Activated naive CD4-positive, alpha-beta T cell treated with anti-CD3 and anti-CD28 coated beads for 36 hours (primary cell): ENCODE measurements at regions of chr13 and their contacts with region 1.

Region 1: GRCh38 chr13:43804461-43805070 is 17.8 kb upstream of the ENOX1 start:
- DNase-seq: peak; percentile 15
- H3K4me3 Mint-ChIP-seq: no peak overlapping the region
- H3K27ac Mint-ChIP-seq: no peak overlapping the region
- H3K4me1 Mint-ChIP-seq: peaks cover 8% of the 10 kb centered on the region
- H3K27me3 Mint-ChIP-seq: peaks cover 17% of the 10 kb centered on the region

Region 2: DNA sequence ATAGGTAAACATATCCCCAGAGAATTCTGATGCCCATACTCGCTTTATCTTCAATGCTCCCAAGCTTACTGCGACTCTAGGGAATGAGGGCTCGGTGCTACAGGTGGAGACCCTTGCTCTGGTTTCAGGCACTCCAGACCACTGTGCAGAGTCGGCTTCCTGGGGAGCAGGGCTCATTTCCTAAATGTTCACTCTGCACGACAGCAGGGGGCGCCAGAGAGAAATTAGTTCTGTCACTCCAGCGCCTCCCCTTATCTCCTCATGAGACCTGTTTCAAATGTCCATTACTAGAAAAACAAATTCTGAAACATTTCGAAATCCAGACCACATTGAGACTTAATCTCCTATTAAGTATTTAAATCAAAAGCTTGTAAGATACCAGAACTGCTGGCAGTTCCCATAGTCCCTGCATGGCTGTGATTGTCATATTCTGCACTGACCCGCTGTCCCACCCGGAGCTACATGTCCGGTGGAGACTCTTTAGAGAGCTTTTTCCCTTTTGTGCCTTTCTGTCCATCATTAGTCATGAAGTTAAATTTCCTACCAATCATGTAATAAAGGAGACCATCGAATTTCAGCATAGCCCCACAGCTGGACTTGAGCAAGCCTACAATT is 834.9 kb before region 1 on chr13:
- CTCF ChIA-PET with region 1: interaction called, 11 read pairs
- intact Hi-C with region 1: loop called (anchors 1 kb)
- DNase-seq: peak; percentile 88
- H3K4me3 Mint-ChIP-seq: no peak overlapping the region
- H3K27ac Mint-ChIP-seq: no peak overlapping the region
- H3K4me1 Mint-ChIP-seq: peaks cover 8% of the 10 kb centered on the region
- H3K27me3 Mint-ChIP-seq: no peaks in the 10 kb centered on the region

Region 3: GRCh38 chr13:43448605-43449336 is 355.8 kb before region 1 on chr13:
- CTCF ChIA-PET with region 1: no interaction called
- intact Hi-C with region 1: loop called (anchors 10 kb)
- DNase-seq: no peak
- H3K4me3 Mint-ChIP-seq: no peak overlapping the region
- H3K27ac Mint-ChIP-seq: no peak overlapping the region
- H3K4me1 Mint-ChIP-seq: no peaks in the 10 kb centered on the region
- H3K27me3 Mint-ChIP-seq: peaks cover 11% of the 10 kb centered on the region

Region 4: GRCh38 chr13:43786773-43787517 is 17.6 kb before region 1 on chr13 and contains the start of gene ENOX1:
- CTCF ChIA-PET with region 1: interaction called, 7 read pairs
- intact Hi-C with region 1: loop called (anchors 2 kb)
- DNase-seq: peak; percentile 50
- H3K4me3 Mint-ChIP-seq: peak within 1 kb of the TSS; percentile 76
- H3K27ac Mint-ChIP-seq: no peak within 1 kb of the TSS
- H3K4me1 Mint-ChIP-seq: peaks cover 9% of the 10 kb centered on the region
- H3K27me3 Mint-ChIP-seq: peaks cover 45% of the 10 kb centered on the region
- total RNA-seq, gene ENOX1: 0.35 to 0.64 TPM